ENCODE measurements at regions of chr1 and their contacts with region 1.

Region 1: DNA sequence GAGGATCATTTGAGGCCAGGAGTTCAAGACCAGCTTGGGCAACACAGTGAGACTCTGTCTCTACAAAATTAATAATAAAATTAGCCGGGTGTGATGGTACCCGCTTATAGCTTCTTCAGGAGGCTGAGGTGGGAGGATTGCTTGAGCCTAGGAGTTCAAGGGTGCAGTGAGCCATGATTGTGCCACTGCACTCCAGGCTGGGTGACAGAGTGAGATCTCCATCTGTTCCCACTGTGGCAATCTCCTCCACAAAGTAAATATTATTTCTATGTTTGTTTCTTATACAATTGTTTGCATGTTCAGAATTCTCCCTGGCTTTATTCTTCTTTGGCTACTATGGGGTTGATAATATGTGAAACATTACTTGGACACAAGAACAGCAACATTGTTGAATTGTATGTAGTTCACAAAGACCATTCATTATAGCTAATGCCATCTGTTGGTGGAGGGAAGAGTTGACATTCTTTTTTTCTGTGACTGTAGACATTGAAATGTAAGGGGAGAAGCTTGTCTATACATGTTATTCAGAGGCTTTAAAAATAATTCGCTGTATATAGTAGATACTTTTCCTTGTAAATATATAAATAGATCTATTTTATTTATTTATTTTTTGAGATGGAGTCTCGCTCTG is 47.8 kb upstream of the SRSF10 start:
- DNase-seq: peak; percentile 38
- H3K4me3 ChIP-seq: no peak overlapping the region
- H3K27ac ChIP-seq: no peak overlapping the region
- H3K4me1 ChIP-seq: peaks cover 0 to 6% of the 10 kb centered on the region in 2 experiments; a peak in 1 of 4 replicates
- H3K27me3 ChIP-seq: no peaks in the 10 kb centered on the region
- CTCF ChIP-seq: peak; percentile 75
- EP300 ChIP-seq: no peak
- RAD21 ChIP-seq: peak; percentile 67

Region 2: DNA sequence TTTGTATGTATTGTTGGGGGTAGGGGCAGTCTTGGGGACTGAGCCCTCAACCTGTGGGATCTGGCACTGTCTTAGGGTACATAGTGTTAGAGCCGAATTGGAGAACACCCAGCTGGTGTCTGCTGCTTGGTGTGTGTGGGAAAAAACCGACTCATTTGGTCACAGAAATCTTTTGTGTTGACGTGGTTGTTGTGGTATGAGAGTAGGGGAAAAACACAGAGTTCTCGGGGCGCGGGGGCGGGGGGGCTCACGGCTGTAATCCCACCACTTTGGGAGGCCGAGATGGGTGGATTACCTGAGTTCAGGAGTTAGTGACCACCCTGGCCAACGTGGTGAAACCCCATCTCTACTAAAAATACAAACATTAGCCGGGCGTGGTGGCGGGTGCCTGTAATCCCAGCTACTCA is 32.5 kb before region 1 on chr1:
- CTCF ChIA-PET with region 1: no interaction called
- POLR2A ChIA-PET with region 1: no interaction called
- DNase-seq: no peak
- H3K4me3 ChIP-seq: no peak overlapping the region
- H3K27ac ChIP-seq: no peak overlapping the region
- H3K4me1 ChIP-seq: no peaks in the 10 kb centered on the region; a peak in 1 of 4 replicates
- H3K27me3 ChIP-seq: no peaks in the 10 kb centered on the region
- CTCF ChIP-seq: no peak
- EP300 ChIP-seq: no peak
- RAD21 ChIP-seq: no peak

Region 3: GRCh38 chr1:24047101-24047459 is 19.1 kb after region 1 on chr1:
- CTCF ChIA-PET with region 1: interaction called, 10 read pairs
- POLR2A ChIA-PET with region 1: no interaction called
- DNase-seq: no peak
- H3K4me3 ChIP-seq: no peak overlapping the region
- H3K27ac ChIP-seq: peak overlapping the region in 1 of 2 experiments; percentile 78; a peak in 3 of 4 replicates
- H3K4me1 ChIP-seq: peaks cover 10 to 14% of the 10 kb centered on the region in 2 experiments; a peak in 3 of 4 replicates
- H3K27me3 ChIP-seq: no peaks in the 10 kb centered on the region
- CTCF ChIP-seq: no peak
- EP300 ChIP-seq: no peak
- RAD21 ChIP-seq: no peak